Mammary epithelial cell (primary cell): ENCODE measurements at regions of chr19 and their contacts with region 1.

Region 1: DNA sequence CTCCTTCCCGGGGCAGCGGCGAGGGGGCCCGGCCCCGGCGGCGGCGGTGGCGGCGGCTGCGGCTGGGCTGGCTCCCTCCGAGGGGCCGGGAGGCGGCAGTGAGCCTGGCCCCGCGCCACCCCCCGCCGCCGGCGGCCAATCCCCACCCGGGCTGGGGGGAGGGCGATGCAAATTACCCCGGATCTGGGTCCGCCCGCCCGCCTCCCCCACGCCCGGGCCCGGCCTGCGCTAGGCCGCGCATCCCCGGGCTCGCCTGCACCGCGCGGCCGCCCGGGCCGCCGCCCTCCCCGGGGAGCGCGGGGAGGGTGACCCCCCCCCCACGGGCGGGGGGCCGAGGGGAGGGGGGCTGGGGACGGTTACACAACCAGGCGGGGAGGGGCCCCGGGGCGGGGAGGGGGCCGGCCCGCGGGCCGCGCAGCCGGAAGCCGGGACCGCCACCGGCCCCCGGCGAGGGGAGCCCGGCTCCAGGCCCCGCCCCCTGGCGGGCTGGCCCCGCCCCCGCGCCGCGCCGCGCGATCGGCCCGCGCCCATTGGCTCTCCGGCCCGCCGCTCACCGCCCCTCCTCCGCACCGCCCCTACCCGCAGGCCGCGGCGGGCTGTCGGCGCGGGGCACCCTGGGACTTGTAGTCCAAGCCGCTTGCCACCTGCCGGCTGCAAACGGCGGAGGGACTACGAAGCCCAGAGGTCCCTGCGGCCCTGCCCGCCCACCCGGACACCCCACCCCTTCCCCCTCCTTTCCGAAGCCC is 1.1 kb downstream of the ZBTB7A start:
- DNase-seq: peak; percentile 92
- H3K4me3 ChIP-seq: peak overlapping the region; percentile 88 to 92 (median 92)
- H3K27ac ChIP-seq: no peak overlapping the region
- H3K4me1 ChIP-seq: peaks cover 31% of the 10 kb centered on the region
- H3K27me3 ChIP-seq: no peaks in the 10 kb centered on the region
- CTCF ChIP-seq: no peak

Region 2: DNA sequence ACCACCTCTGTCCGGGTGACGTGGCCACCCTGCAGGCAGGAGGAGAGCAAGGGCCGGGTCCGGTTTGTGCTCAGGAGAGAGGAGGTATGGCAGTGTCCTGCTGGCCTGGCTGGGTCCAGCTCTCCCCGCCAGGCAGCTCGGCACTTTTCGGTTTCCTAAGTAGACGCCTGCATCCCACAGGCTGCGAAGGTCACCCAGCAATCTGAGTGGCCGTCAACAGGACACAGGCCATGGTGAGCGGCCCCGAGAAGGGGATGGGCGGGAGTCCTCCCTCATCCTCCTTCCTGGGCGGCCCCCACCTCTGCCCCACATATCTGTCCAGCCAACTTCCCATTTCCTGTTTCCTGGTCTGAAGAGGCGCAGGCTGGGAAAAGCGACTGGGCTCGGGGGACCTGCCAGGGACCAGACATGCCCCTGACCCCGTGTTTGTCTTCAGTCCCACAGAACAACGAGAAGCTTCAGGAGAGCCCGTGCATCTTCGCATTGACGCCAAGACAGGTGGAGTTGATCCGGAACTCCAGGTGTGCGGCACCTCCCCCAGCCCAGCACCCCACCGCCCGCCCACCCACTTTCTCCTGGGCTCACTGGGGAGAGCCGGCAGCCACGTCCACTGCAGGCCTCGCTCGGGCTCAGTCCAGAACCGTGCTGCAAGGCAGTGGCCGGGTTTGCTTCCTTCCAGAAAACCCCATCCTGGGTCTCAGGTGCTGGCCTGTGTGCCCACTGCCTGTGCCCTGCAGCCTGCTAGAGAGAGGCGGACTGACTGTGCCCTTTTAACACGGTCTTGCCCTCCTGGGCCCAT is 41.8 kb before region 1 on chr19:
- CTCF ChIA-PET with region 1: no interaction called
- dilution Hi-C with region 1: no loop called
- in situ Hi-C with region 1: no loop called
- intact Hi-C with region 1: no loop called
- DNase-seq: no peak
- H3K4me3 ChIP-seq: no peak overlapping the region
- H3K27ac ChIP-seq: no peak overlapping the region
- H3K4me1 ChIP-seq: no peaks in the 10 kb centered on the region
- H3K27me3 ChIP-seq: no peaks in the 10 kb centered on the region
- CTCF ChIP-seq: no peak

Region 3: DNA sequence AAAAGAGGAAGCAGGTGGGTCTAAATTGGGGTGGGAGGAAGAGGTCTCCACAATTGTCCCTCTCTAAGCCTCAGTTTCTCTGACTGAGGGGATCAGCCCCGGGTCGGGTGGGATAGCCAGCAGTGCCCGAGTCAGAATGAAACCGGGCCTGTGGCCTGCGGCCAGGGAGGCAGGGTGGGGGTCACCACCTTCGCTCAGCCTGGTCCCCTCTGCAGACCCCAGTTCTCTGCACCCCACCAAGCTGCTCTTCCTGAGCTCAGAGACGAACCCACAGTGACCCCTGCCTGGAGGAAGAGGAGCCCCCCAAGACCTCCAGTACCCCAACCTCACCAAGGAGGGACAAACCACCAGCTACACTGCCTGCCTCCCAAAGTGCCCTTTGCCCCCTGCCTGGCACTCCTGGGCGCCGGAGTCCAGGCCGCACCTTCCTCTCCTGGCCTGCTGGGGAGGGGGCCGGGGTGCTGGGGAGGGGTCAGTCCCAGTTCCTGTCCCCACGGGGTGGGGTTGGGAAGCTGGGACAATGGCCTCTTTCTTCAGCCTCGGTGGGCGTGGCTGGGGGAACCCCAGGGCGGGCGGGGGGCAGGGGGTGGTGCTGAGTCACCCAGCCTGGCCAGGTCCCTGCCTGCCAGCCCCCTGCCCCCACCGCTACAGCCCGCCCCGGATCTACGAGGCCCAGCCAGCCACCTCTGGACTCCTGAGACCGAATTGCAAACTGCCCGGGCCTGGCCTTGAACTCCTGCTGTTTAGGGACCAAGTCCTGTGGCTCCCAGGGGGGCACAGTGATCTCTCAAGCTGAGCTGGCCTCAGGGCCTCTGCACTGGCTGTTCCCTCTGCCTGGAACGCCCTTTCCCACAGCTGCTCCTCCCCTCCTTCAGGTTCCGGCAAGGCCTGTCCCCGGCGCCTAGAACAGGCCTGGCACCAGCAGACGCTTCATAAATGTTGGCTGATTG is 13.3 kb before region 1 on chr19:
- CTCF ChIA-PET with region 1: no interaction called
- dilution Hi-C with region 1: no loop called
- in situ Hi-C with region 1: no loop called
- intact Hi-C with region 1: loop called (anchors 1 kb)
- DNase-seq: peak; percentile 91
- H3K4me3 ChIP-seq: peak overlapping the region; percentile 21 to 34 (median 33)
- H3K27ac ChIP-seq: peak overlapping the region; percentile 97
- H3K4me1 ChIP-seq: peaks cover 32% of the 10 kb centered on the region
- H3K27me3 ChIP-seq: no peaks in the 10 kb centered on the region
- CTCF ChIP-seq: no peak

Region 4: GRCh38 chr19:4130744-4131438 is 65.3 kb after region 1 on chr19:
- CTCF ChIA-PET with region 1: no interaction called
- dilution Hi-C with region 1: loop called (anchors 5 kb)
- in situ Hi-C with region 1: no loop called
- intact Hi-C with region 1: loop called (anchors 5 kb)
- DNase-seq: peak; percentile 89
- H3K4me3 ChIP-seq: no peak overlapping the region
- H3K27ac ChIP-seq: peak overlapping the region; percentile 87
- H3K4me1 ChIP-seq: peaks cover 15% of the 10 kb centered on the region
- H3K27me3 ChIP-seq: no peaks in the 10 kb centered on the region
- CTCF ChIP-seq: no peak

Region 5: GRCh38 chr19:4139614-4140236 is 74.1 kb after region 1 on chr19:
- CTCF ChIA-PET with region 1: no interaction called
- dilution Hi-C with region 1: loop called (anchors 5 kb)
- in situ Hi-C with region 1: no loop called
- intact Hi-C with region 1: loop called (anchors 5 kb)
- DNase-seq: peak; percentile 54
- H3K4me3 ChIP-seq: no peak overlapping the region
- H3K27ac ChIP-seq: no peak overlapping the region
- H3K4me1 ChIP-seq: no peaks in the 10 kb centered on the region
- H3K27me3 ChIP-seq: no peaks in the 10 kb centered on the region
- CTCF ChIP-seq: peak; percentile 86 to 89